AG04450 (cell line): ENCODE measurements at regions of chr16 and their contacts with region 1.

Region 1: GRCh38 chr16:3849751-3850543 is 30.6 kb downstream of the CREBBP start:
- DNase-seq: no peak
- H3K4me3 ChIP-seq: no peak overlapping the region
- H3K27ac ChIP-seq: peak overlapping the region; percentile 77
- H3K27me3 ChIP-seq: no peaks in the 10 kb centered on the region
- CTCF ChIP-seq: no peak

Region 2: GRCh38 chr16:3774156-3774767 is 75.7 kb before region 1 on chr16:
- CTCF ChIA-PET with region 1: no interaction called
- POLR2A ChIA-PET with region 1: interaction called, 11 read pairs
- DNase-seq: peak; percentile 13
- H3K4me3 ChIP-seq: no peak overlapping the region
- H3K27ac ChIP-seq: no peak overlapping the region
- H3K27me3 ChIP-seq: no peaks in the 10 kb centered on the region
- CTCF ChIP-seq: no peak

Region 3: DNA sequence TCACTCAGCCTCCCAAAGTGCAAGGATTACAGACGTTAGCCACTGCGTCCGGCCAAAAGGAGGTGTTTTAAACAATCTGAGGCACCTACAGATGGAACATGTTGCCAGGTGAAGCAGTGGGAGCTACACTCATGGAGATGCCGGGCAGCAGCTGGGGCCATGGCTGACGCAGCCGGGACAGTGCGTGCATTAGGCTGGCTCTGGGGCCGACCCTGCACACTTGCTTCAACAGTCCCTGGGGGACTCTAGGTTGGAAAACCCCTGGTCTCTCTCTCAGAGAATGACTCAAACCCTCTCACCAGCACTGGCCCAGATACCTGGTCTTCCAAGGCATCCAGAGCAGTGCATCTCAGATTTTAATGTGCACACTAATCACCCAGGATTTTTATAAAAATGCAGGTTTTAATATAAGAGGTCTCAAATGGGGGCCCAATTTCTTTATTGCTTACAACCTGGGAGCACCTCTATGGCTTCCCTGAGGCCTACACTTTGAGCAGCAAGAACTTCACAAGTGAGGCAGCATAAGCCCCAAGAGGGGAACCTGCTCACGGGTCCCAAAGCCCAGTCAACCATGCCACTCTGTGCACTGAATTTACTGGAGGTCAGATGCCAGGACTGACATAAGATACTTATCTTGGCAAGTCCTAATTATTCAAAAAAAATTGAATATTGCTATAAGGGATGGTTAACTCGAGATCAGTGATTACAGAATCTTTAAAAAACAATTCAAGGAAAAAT is 61.9 kb before region 1 on chr16:
- CTCF ChIA-PET with region 1: no interaction called
- POLR2A ChIA-PET with region 1: no interaction called
- DNase-seq: no peak
- H3K4me3 ChIP-seq: no peak overlapping the region
- H3K27ac ChIP-seq: no peak overlapping the region
- H3K27me3 ChIP-seq: no peaks in the 10 kb centered on the region
- CTCF ChIP-seq: no peak

Region 4: DNA sequence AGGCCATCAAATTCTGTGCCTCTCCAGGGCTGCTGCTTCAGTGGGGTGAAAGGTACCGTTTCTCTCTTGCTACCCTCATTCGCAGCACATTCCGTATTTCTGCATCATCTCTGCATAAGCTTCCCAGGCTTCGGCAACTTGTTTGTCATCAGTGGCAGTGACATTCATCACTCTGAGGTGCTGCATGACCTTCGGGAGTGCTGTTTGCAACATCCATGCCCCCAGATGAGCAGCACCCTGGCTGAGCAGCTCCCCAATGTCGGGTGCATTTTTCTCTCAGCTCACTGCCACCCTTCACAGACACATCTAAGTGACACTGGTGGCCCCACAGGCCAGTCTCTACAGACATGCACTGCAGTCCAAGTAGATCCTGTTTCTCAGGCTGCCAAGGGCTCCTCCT is 26.7 kb after region 1 on chr16:
- CTCF ChIA-PET with region 1: no interaction called
- POLR2A ChIA-PET with region 1: interaction called, 24 read pairs
- DNase-seq: no peak
- H3K4me3 ChIP-seq: peak overlapping the region; percentile 35
- H3K27ac ChIP-seq: no peak overlapping the region
- H3K27me3 ChIP-seq: no peaks in the 10 kb centered on the region
- CTCF ChIP-seq: no peak